Gastrocnemius medialis (tissue), 4 donors: ENCODE measurements at regions of chr3 and their contacts with region 1.

Region 1: DNA sequence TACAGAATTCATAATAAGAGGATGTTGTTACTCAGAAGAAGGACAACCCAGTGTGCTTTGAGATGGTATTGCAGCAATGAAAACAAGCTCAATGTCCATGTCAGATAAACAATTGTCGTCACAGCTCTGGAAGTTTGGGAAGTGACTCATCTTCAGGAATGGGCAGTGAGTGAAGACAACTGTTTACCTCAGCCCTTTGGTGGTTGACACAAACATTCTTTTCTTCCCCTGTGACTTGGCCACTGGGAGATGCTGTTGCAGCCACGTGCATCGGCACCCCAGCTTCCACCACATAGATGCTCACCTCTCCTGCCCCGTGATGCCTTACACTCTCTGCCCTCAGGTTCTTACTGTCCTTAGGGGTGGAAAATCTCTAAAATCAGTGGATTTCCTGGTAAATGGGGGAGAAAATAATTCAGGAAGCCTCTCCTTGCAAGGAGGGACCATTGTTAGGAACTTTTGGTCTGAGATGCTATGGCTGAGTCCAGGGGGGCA is 114.1 kb upstream of the GALNT15 start:
- DNase-seq: peak; percentile 89
- ATAC-seq: peak; percentile 85 to 89
- H3K4me3 ChIP-seq: peak overlapping the region in 2 of 4 donors; percentile 3 to 4
- H3K27ac ChIP-seq: peak overlapping the region; percentile 83 to 90 (median 86)
- H3K4me1 ChIP-seq: peaks cover 51 to 54% of the 10 kb centered on the region in 2 donors
- H3K27me3 ChIP-seq: no peaks in the 10 kb centered on the region
- CTCF ChIP-seq: peak in 1 of 5 experiments; percentile 8
- POLR2A ChIP-seq: peak in 1 of 2 donors; percentile 72

Region 2: DNA sequence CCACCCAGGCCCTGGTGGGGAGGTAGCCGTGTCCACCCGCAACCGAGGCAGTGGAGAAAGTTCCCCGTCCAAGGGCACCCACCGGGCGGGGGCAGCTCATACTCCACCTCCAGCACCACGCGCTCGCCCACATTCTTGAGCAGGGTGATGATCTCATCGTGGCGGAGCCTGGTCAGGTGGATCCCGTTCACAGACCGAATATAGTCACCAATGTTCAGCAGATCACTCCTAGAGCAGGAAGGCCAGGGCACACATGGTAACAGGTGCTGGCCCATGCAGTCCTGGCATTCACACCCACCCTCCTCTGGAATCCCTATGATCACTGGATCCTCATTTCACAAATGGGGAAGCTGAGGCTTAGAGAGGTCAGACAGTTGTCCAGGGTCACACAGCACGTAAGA is 1536.1 kb before region 1 on chr3:
- in situ Hi-C with region 1: no loop called
- intact Hi-C with region 1: loop called (anchors 5 kb)
- DNase-seq: peak; percentile 90 to 96
- ATAC-seq: peak; percentile 68 to 76
- H3K4me3 ChIP-seq: no peak overlapping the region
- H3K27ac ChIP-seq: peak overlapping the region; percentile 92 to 99 (median 97)
- H3K4me1 ChIP-seq: peaks cover 62 to 69% of the 10 kb centered on the region in 2 donors
- H3K27me3 ChIP-seq: no peaks in the 10 kb centered on the region
- CTCF ChIP-seq: no peak
- POLR2A ChIP-seq: peak; percentile 68 to 85

Region 3: DNA sequence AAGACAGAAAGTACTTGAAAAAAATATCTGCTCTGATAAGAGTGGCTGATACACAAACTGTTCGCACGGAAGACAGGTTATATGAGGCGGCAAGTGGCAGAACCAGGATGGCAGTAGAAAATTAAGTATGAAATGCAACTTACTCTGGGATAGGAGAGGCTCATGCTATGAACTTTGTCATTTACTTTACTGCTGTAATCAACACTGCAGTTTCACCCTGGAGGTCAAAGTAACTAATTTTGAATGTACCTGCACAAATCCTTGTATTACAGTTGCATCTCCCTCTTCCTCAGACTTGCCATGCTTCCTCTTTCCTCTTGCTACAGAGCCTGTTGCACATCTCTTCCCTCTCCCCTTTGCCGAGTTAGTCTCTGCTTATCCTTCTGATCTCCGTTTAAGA is 497.8 kb before region 1 on chr3:
- in situ Hi-C with region 1: no loop called
- intact Hi-C with region 1: no loop called
- DNase-seq: no peak
- ATAC-seq: no peak
- H3K4me3 ChIP-seq: no peak overlapping the region
- H3K27ac ChIP-seq: no peak overlapping the region
- H3K4me1 ChIP-seq: peaks cover 0 to 3% of the 10 kb centered on the region in 2 donors
- H3K27me3 ChIP-seq: no peaks in the 10 kb centered on the region
- CTCF ChIP-seq: no peak
- POLR2A ChIP-seq: no peak

Region 4: GRCh38 chr3:16112910-16113504 is 52.6 kb after region 1 on chr3:
- in situ Hi-C with region 1: no loop called
- intact Hi-C with region 1: loop called (anchors 5 kb)
- DNase-seq: no peak
- ATAC-seq: no peak
- H3K4me3 ChIP-seq: no peak overlapping the region
- H3K27ac ChIP-seq: peak overlapping the region; percentile 56 to 70 (median 62)
- H3K4me1 ChIP-seq: peaks cover 0 to 24% of the 10 kb centered on the region in 2 donors
- H3K27me3 ChIP-seq: no peaks in the 10 kb centered on the region
- CTCF ChIP-seq: no peak
- POLR2A ChIP-seq: no peak

Region 5: DNA sequence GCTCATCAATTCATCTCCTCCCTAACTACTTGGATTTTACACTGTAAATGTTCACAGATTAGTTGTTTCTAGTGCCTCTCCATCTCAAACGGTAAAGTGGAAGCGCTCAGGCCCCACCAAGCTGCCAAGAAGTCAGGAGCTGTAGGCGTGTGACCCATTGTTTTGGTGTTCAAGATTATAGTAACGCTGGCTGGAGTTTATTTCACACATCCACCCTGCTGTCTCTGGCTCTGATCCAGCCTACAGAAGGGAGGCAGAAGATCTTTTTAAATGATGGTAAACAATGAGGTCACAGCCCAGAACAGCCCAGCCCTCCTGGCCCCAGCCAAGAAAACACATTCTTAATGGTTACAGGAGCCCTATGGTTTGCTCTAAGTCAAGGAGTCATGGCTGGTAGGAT is 88.4 kb after region 1 on chr3:
- in situ Hi-C with region 1: no loop called
- intact Hi-C with region 1: loop called (anchors 2 kb)
- DNase-seq: peak; percentile 75 to 78
- ATAC-seq: peak; percentile 52 to 75
- H3K4me3 ChIP-seq: no peak overlapping the region
- H3K27ac ChIP-seq: peak overlapping the region; percentile 73 to 85 (median 76)
- H3K4me1 ChIP-seq: peaks cover 49 to 51% of the 10 kb centered on the region in 2 donors
- H3K27me3 ChIP-seq: no peaks in the 10 kb centered on the region
- CTCF ChIP-seq: no peak
- POLR2A ChIP-seq: no peak

Region 6: DNA sequence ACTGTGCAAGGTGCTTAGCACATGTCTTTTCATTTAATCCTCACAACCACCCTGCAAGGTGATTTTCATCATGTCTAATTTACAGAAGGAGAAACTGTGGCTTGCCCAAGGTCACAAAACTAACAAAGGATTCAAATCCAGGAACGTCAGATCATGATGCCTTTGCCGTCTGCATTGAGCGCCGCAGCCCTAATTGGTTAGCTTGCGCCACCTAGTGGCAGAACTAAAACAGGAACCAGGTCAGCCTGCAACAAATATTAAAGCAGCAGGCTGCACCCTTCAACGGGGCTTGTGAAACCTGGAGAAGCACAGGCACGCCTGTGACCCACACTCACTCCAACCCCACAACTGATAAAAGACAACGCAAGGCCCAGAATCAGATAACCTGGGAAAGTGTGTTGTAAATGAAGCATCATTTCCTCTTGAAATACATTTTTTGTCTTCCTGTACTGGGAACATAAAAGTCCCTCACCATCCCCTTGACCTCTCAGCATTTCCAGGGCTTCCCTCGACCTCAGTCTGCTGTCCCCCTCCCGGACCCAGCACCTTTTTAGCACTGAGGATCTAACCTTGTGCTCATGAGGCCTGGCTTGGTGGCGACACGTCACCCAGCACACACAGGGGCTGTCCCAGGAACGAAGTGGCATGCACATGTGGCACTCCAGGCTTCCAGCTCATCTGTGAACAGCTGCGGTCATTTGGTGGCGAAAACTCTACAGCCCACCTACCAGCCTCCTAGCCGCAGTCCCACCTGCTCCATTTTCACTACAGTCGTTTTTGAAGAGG is 187.1 kb after region 1 on chr3:
- in situ Hi-C with region 1: loop called in 1 of 4 experiments (anchors 10 kb)
- intact Hi-C with region 1: no loop called
- DNase-seq: peak; percentile 61 to 78
- ATAC-seq: peak; percentile 39 to 60
- H3K4me3 ChIP-seq: no peak overlapping the region
- H3K27ac ChIP-seq: no peak overlapping the region
- H3K4me1 ChIP-seq: peaks cover 26 to 27% of the 10 kb centered on the region in 2 donors
- H3K27me3 ChIP-seq: no peaks in the 10 kb centered on the region
- CTCF ChIP-seq: peak; percentile 79 to 98 (median 95)
- POLR2A ChIP-seq: no peak